Uterus (tissue), 4 donors: ENCODE measurements at regions of chr4 and their contacts with region 1.

Region 1: DNA sequence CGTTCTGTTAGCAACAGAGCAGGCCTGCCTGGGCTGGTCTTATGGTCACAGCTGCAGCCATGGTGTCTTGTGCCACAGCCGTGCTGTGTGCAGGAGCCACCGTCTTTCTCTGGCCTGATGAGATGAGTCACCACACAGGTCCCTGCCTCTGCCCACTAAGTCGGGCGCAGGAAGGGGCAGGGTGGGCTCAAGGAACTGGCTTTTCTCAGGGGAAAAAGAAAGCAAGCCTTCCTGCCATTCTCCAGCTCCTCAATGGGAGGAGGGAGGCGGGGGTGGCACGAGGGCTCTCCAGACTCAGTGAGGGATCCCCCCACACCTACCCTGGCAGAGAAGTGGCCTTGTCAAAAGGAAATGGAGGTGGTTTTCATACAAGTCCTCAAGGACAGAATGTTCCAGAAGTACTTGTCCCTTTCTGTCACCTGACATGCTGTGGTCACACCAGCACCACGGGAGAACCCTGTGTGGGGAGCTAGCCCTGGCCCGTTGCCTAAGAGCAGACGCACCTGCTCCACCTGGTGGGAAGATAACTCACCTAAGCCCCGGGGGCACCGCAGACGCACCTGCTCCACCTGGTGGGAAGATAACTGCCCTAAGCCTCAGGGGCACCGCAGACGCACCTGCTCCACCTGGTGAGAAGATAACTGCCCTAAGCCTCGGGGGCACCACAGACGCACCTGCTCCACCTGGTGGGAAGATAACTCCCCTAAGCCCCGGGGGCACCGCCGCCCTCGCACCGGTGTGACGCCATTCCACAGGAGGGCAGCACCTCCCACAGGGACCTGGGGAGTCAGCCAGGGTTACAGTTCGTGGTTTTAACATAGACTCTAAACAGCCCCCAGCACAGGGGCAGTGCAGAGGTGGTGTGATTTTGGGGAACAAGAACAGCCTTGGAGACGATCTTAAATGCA is 18.5 kb downstream of the UVSSA start:
- DNase-seq: no peak
- H3K4me3 ChIP-seq: no peak overlapping the region
- H3K27ac ChIP-seq: no peak overlapping the region
- H3K4me1 ChIP-seq: no peaks in the 10 kb centered on the region
- H3K27me3 ChIP-seq: no peaks in the 10 kb centered on the region
- CTCF ChIP-seq: no peak
- POLR2A ChIP-seq: no peak

Region 2: DNA sequence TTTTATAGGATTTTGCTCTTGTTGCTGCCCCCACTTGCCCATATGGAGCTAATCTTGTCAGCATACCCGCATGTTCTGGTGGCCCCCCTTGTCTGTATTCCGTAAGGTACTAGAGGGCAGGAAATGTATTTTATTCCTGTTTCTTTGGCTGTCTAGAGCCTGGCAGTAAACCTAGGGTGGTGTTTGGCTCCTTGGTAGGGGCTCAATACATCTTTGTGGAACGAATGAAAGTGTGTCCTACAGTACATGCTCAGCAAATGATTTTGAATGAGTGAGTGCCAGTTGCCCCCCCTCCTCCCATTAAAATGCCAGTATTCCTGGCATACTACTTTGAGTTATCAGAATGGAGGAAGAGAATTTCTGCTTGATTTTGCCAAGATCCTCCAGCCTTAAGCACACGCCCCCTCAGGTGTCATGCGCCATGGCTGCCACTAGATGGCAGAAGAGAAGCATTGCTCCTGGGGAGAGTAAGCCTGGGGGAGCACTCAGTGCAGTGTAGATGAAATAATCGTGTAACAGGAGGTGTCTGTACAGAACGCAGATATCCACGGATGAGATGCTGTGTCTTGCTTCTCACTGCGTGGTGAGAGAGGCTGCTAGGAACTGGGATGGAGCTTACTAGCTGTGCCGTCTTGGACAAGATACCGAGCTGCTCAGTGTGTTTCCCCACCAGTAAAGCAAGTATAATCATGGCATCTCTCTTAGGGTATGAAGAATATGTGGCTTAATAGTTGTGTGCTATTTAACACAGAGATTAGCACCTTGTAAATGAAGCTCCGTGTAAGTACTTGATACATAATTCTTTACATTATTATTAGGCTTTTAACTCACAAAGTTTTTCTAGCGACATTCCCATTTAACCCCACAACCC is 235.0 kb before region 1 on chr4:
- intact Hi-C with region 1: loop called (anchors 10 kb)
- DNase-seq: peak; percentile 68 to 83
- H3K4me3 ChIP-seq: no peak overlapping the region
- H3K27ac ChIP-seq: no peak overlapping the region
- H3K4me1 ChIP-seq: no peaks in the 10 kb centered on the region
- H3K27me3 ChIP-seq: no peaks in the 10 kb centered on the region
- CTCF ChIP-seq: peak; percentile 97 to 99 (median 98)
- POLR2A ChIP-seq: no peak

Region 3: GRCh38 chr4:1629699-1630083 is 264.2 kb after region 1 on chr4:
- intact Hi-C with region 1: loop called (anchors 10 kb)
- DNase-seq: no peak
- H3K4me3 ChIP-seq: no peak overlapping the region
- H3K27ac ChIP-seq: no peak overlapping the region
- H3K4me1 ChIP-seq: no peaks in the 10 kb centered on the region
- H3K27me3 ChIP-seq: no peaks in the 10 kb centered on the region
- CTCF ChIP-seq: no peak
- POLR2A ChIP-seq: no peak